ENCODE measurements at regions of chr6 and their contacts with region 1.

Region 1: GRCh38 chr6:137094411-137095008 is 49.7 kb upstream of the IL20RA start:
- DNase-seq: peak in 1 of 2 donors; percentile 70
- ATAC-seq: peak in 7 of 8 donors; percentile 63 to 79 (median 74)
- H3K4me3 ChIP-seq: no peak overlapping the region
- H3K27ac ChIP-seq: no peak overlapping the region
- H3K4me1 ChIP-seq: peaks cover 0 to 15% (median 0%) of the 10 kb centered on the region in 9 donors
- H3K27me3 ChIP-seq: no peaks in the 10 kb centered on the region
- CTCF ChIP-seq: peak; percentile 58 to 90 (median 80)

Region 2: GRCh38 chr6:137165375-137166246 is 71.1 kb after region 1 on chr6:
- intact Hi-C with region 1: loop called in 2 of 10 experiments (anchors 2 to 5 kb)
- DNase-seq: peak in 1 of 2 donors; percentile 40
- ATAC-seq: no peak
- H3K4me3 ChIP-seq: no peak overlapping the region
- H3K27ac ChIP-seq: peak overlapping the region in 1 of 10 donors; percentile 62
- H3K4me1 ChIP-seq: peaks cover 0 to 42% (median 6%) of the 10 kb centered on the region in 9 donors
- H3K27me3 ChIP-seq: no peaks in the 10 kb centered on the region
- CTCF ChIP-seq: peak in 6 of 9 donors; percentile 17 to 57 (median 30)

Region 3: GRCh38 chr6:137202078-137202477 is 107.6 kb after region 1 on chr6:
- intact Hi-C with region 1: loop called in 7 of 10 experiments (anchors 5 to 10 kb)
- DNase-seq: no peak
- ATAC-seq: peak in 7 of 8 donors; percentile 72 to 89 (median 76)
- H3K4me3 ChIP-seq: no peak overlapping the region
- H3K27ac ChIP-seq: no peak overlapping the region
- H3K4me1 ChIP-seq: peaks cover 0 to 48% (median 26%) of the 10 kb centered on the region in 9 donors
- H3K27me3 ChIP-seq: no peaks in the 10 kb centered on the region
- CTCF ChIP-seq: peak; percentile 16 to 61 (median 43)

Region 4: GRCh38 chr6:137210903-137211302 is 116.4 kb after region 1 on chr6:
- intact Hi-C with region 1: loop called in 4 of 10 experiments (anchors 5 to 10 kb)
- DNase-seq: no peak
- ATAC-seq: peak in 7 of 8 donors; percentile 37 to 87 (median 69)
- H3K4me3 ChIP-seq: no peak overlapping the region
- H3K27ac ChIP-seq: peak overlapping the region in 9 of 10 donors; percentile 12 to 99 (median 64)
- H3K4me1 ChIP-seq: peaks cover 20 to 100% (median 85%) of the 10 kb centered on the region in 9 donors
- H3K27me3 ChIP-seq: no peaks in the 10 kb centered on the region
- CTCF ChIP-seq: no peak

Region 5: GRCh38 chr6:137218917-137219663 is 124.6 kb after region 1 on chr6 and contains the start of gene IFNGR1:
- intact Hi-C with region 1: loop called in 1 of 10 experiments (anchors 10 kb)
- DNase-seq: peak; percentile 98 to 99
- ATAC-seq: peak; percentile 96 to 97 (median 96)
- H3K4me3 ChIP-seq: peak within 1 kb of the TSS; percentile 45 to 93 (median 84)
- H3K27ac ChIP-seq: peak within 1 kb of the TSS; percentile 86 to 100 (median 98)
- H3K4me1 ChIP-seq: peaks cover 5 to 87% (median 67%) of the 10 kb centered on the region in 9 donors
- H3K27me3 ChIP-seq: no peaks in the 10 kb centered on the region
- CTCF ChIP-seq: no peak
- total RNA-seq, gene IFNGR1: 55.8 to 132 (median 78.7) TPM

Region 6: DNA sequence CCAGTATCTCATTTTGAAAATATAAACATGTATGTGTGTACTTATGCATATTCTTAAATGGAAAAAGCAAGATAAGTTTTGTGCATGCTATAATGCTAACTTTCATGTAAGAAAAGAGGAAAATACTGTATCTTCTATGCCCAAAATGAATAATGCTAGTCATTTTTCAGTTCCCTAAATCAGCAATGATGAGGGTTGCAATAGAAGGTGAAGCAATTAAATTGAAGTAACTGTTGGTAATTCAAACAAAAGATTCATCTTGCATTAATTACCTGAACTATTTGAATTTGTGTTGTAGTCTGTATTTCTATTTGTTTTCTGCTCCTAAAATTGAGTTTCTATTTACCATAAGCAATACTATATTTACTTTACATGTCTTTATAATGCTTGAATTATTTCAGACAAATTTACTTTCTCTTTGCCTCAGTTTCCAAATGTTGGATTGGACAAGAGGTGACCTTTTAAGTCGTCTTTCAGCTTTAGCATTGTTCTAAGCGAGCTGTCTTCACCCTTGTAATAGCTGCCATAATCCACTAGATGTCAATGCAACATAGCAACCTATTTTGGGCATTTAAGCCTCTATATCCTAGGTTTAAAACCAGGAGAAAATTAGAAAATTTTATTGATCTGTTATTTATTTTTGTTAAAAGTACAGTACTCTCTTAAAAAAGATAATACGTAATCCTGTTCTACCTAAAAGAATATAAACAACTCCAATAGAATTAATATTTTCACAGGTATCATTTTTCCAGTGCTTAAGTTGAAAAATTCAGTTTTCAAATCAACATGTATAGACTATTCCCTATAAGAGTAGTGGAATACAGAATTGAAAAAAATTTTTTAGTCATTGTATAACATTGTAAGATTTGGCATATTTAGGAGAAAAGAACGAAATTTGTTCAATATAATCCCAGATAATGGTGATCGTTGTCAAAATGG is 177.0 kb after region 1 on chr6:
- intact Hi-C with region 1: loop called in 2 of 10 experiments (anchors 5 kb)
- DNase-seq: no peak
- ATAC-seq: peak in 7 of 8 donors; percentile 63 to 82 (median 73)
- H3K4me3 ChIP-seq: no peak overlapping the region
- H3K27ac ChIP-seq: no peak overlapping the region
- H3K4me1 ChIP-seq: peaks cover 0 to 14% (median 0%) of the 10 kb centered on the region in 9 donors
- H3K27me3 ChIP-seq: no peaks in the 10 kb centered on the region
- CTCF ChIP-seq: peak; percentile 76 to 97 (median 93)

Region 7: GRCh38 chr6:137313928-137314855 is 219.7 kb after region 1 on chr6:
- intact Hi-C with region 1: loop called (anchors 1 to 10 kb)
- DNase-seq: peak; percentile 69 to 74
- ATAC-seq: peak; percentile 79 to 96 (median 91)
- H3K4me3 ChIP-seq: peak overlapping the region in 5 of 10 donors; percentile 2 to 35 (median 20)
- H3K27ac ChIP-seq: peak overlapping the region in 1 of 10 donors; percentile 10
- H3K4me1 ChIP-seq: peaks cover 0 to 27% (median 13%) of the 10 kb centered on the region in 9 donors
- H3K27me3 ChIP-seq: no peaks in the 10 kb centered on the region
- CTCF ChIP-seq: peak; percentile 65 to 86 (median 81)